ENCODE measurements at regions of chr3 and their contacts with region 1.

Region 1: GRCh38 chr3:172546628-172547214 is 23.5 kb upstream of the TNFSF10 start:
- DNase-seq: no peak
- ATAC-seq: no peak
- H3K4me3 ChIP-seq: no peak overlapping the region
- H3K27ac ChIP-seq: peak overlapping the region in 9 of 12 donors; percentile 20 to 68 (median 46)
- H3K4me1 ChIP-seq: peaks cover 0 to 50% (median 12%) of the 10 kb centered on the region in 12 donors
- H3K27me3 ChIP-seq: no peaks in the 10 kb centered on the region
- CTCF ChIP-seq: peak in 2 of 12 donors; percentile 3 to 26
- POLR2A ChIP-seq: no peak

Region 2: GRCh38 chr3:172094621-172095557 is 451.8 kb before region 1 on chr3:
- intact Hi-C with region 1: no loop called
- DNase-seq: peak in 1 of 5 donors; percentile 60
- ATAC-seq: peak in 3 of 4 donors; percentile 23 to 43 (median 31)
- H3K4me3 ChIP-seq: no peak overlapping the region
- H3K27ac ChIP-seq: peak overlapping the region in 10 of 12 donors; percentile 5 to 66 (median 36)
- H3K4me1 ChIP-seq: peaks cover 4 to 74% (median 67%) of the 10 kb centered on the region in 12 donors
- H3K27me3 ChIP-seq: no peaks in the 10 kb centered on the region
- CTCF ChIP-seq: no peak
- POLR2A ChIP-seq: no peak

Region 3: DNA sequence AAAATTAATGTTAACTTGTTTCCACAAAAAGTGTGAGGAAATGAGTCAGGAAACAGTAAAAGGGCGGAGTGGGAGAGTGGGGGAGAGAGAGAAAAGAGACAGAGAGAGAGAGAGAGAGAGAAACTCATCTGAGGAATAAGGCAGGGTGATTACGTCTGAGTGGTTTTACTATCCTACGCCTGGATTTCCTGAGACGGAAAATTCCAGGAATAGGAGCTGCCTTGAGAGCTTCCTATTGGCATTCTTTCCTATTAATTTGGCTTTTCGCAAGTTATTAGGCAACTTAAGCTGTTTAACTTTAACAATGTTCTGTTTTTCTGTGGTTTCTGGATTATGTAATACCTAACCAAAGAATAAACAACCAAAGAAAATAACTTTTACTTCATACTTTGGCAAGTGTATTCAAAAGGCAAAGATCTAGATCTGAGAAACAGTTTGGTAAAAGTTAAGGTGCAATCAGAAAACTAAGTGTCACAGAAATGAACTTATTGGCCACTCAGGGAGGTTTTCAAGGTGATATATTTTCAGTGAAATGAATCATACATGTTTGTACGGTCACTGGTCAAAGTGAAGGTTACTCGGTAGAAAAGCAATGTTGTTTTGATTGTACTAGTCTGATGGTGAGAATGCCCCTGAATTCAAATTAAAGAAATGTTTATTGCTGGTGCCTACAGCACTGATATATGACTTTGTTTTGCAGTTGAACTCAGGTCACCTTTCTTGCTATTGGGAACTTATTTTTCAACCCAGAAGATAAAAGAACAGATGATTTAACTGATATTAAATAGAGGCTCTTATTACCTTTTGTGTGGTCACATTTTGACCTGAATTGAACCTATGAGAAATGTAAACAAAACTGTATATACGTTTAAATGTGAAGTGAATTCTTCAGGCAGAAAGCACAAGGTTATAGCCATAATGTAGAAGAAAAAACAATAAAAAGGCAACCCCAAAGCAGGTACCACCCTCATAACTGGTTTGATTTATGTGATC is 16.4 kb after region 1 on chr3:
- intact Hi-C with region 1: loop called in 1 of 10 experiments (anchors 2 kb)
- DNase-seq: peak in 2 of 5 donors; percentile 27 to 52
- ATAC-seq: peak; percentile 74 to 96 (median 95)
- H3K4me3 ChIP-seq: peak overlapping the region in 8 of 12 donors; percentile 0 to 35 (median 16)
- H3K27ac ChIP-seq: peak overlapping the region; percentile 33 to 91 (median 78)
- H3K4me1 ChIP-seq: peaks cover 0 to 56% (median 13%) of the 10 kb centered on the region in 12 donors
- H3K27me3 ChIP-seq: no peaks in the 10 kb centered on the region
- CTCF ChIP-seq: no peak
- POLR2A ChIP-seq: no peak

Measured in heart left ventricle (tissue), 16 donors.